CD4-positive, alpha-beta memory T cell (primary cell): ENCODE measurements at regions of chr1 and their contacts with region 1.

Region 1: DNA sequence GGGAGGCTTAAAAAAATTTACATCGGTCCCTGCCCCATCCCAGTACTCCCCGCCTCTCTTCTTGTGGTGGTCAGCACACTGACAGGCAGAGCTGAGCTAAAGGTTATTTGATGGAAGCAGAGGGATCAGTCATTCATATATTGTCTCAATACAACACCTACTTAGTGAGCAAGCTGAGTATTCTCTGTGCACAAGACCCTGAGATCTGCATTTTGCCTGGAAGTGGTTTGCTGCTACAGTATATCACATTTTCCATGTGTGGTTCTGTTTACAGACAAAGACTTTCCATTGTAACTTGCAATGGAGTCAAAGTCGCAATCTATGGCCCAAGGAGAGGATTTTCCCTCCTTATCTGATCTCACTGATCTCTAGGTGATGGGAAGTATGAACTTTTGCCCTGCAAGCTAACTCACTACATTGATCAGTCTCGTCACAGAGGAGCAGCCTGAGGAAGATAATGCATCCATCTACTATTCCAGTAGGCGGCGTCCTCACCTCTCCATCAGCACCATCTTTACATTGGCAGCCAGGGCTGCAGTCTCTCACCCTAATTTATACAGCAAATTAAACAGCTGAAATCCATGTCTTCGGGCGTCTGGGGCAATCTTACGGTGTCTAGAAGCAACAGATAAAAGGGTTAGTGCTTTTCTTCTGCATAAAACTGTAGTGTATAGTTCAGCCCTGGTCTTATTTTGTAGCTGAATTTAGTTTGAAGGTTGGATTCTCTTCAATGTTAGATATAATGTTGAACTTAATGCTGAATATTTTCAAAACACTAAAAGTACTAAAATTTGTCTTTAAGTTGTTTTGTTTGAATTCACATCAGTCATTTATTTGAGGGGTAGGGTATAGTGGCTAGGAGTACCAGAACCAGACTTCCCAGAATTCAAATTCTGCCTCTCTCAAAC is 3.2 kb upstream of the TRAF5 start:
- DNase-seq: peak; percentile 67 to 73 (median 70)
- H3K4me3 ChIP-seq: no peak overlapping the region
- H3K4me3 Mint-ChIP-seq: no peak overlapping the region
- H3K27ac ChIP-seq: no peak overlapping the region
- H3K27ac Mint-ChIP-seq: peak overlapping the region in 3 of 7 donors; percentile 14 to 49 (median 18)
- H3K4me1 ChIP-seq: peaks cover 36% of the 10 kb centered on the region
- H3K4me1 Mint-ChIP-seq: peaks cover 21 to 47% (median 38%) of the 10 kb centered on the region in 4 donors
- H3K27me3 ChIP-seq: no peaks in the 10 kb centered on the region
- H3K27me3 Mint-ChIP-seq: no peaks in the 10 kb centered on the region

Region 2: GRCh38 chr1:210448297-210448892 is 875.0 kb before region 1 on chr1:
- CTCF ChIA-PET with region 1: no interaction called
- POLR2A ChIA-PET with region 1: no interaction called
- intact Hi-C with region 1: loop called (anchors 10 kb)
- DNase-seq: peak in 4 of 5 donors; percentile 10 to 18 (median 12)
- H3K4me3 ChIP-seq: no peak overlapping the region
- H3K4me3 Mint-ChIP-seq: no peak overlapping the region
- H3K27ac ChIP-seq: no peak overlapping the region
- H3K27ac Mint-ChIP-seq: no peak overlapping the region
- H3K4me1 ChIP-seq: peaks cover 14% of the 10 kb centered on the region
- H3K4me1 Mint-ChIP-seq: peaks cover 7 to 19% (median 12%) of the 10 kb centered on the region in 4 donors
- H3K27me3 ChIP-seq: no peaks in the 10 kb centered on the region
- H3K27me3 Mint-ChIP-seq: peaks cover 0 to under 1% of the 10 kb centered on the region in 2 donors

Region 3: DNA sequence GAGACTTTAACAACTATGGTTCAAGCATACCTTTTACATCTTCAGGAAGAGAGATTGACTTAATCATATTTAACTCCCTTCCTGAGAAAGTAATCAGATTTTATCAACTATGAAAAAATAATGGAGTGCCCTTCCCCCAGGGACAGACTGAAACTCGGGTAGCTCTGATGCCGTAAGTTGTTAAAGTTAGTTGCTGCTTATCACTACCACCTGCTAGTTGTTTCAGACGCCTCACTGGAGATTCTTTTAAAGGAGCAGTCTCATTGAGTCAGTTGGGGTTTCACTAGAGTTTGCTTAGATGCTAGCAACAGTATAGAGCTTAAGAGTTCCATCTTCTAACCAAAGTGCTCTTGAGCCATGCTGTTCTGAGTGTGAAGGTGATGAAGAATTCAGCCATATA is 13.8 kb before region 1 on chr1:
- CTCF ChIA-PET with region 1: interaction called, 14 read pairs
- POLR2A ChIA-PET with region 1: interaction called, 3 read pairs
- intact Hi-C with region 1: no loop called
- DNase-seq: no peak
- H3K4me3 ChIP-seq: no peak overlapping the region
- H3K4me3 Mint-ChIP-seq: no peak overlapping the region
- H3K27ac ChIP-seq: no peak overlapping the region
- H3K27ac Mint-ChIP-seq: peak overlapping the region in 3 of 7 donors; percentile 9 to 65 (median 12)
- H3K4me1 ChIP-seq: no peaks in the 10 kb centered on the region
- H3K4me1 Mint-ChIP-seq: peaks cover 4 to 9% (median 8%) of the 10 kb centered on the region in 4 donors
- H3K27me3 ChIP-seq: no peaks in the 10 kb centered on the region
- H3K27me3 Mint-ChIP-seq: no peaks in the 10 kb centered on the region

Region 4: GRCh38 chr1:211352985-211353515 is 29.6 kb after region 1 on chr1:
- CTCF ChIA-PET with region 1: interaction called, 250 read pairs
- POLR2A ChIA-PET with region 1: interaction called, 37 read pairs
- intact Hi-C with region 1: loop called (anchors 1 kb)
- DNase-seq: peak; percentile 42 to 65 (median 55)
- H3K4me3 ChIP-seq: peak overlapping the region; percentile 3 to 34
- H3K4me3 Mint-ChIP-seq: peak overlapping the region; percentile 77 to 92 (median 85)
- H3K27ac ChIP-seq: peak overlapping the region; percentile 25
- H3K27ac Mint-ChIP-seq: peak overlapping the region; percentile 86 to 97 (median 95)
- H3K4me1 ChIP-seq: peaks cover 63% of the 10 kb centered on the region
- H3K4me1 Mint-ChIP-seq: peaks cover 53 to 73% (median 64%) of the 10 kb centered on the region in 4 donors
- H3K27me3 ChIP-seq: no peaks in the 10 kb centered on the region
- H3K27me3 Mint-ChIP-seq: no peaks in the 10 kb centered on the region

Region 5: GRCh38 chr1:211415700-211416099 is 92.3 kb after region 1 on chr1:
- CTCF ChIA-PET with region 1: interaction called, 4 read pairs
- POLR2A ChIA-PET with region 1: interaction called, 7 read pairs
- intact Hi-C with region 1: loop called (anchors 10 kb)
- DNase-seq: no peak
- H3K4me3 ChIP-seq: no peak overlapping the region
- H3K4me3 Mint-ChIP-seq: peak overlapping the region; percentile 49 to 83 (median 78)
- H3K27ac ChIP-seq: peak overlapping the region; percentile 20
- H3K27ac Mint-ChIP-seq: peak overlapping the region; percentile 24 to 86 (median 54)
- H3K4me1 ChIP-seq: peaks cover 7% of the 10 kb centered on the region
- H3K4me1 Mint-ChIP-seq: peaks cover 9 to 13% (median 12%) of the 10 kb centered on the region in 4 donors
- H3K27me3 ChIP-seq: no peaks in the 10 kb centered on the region
- H3K27me3 Mint-ChIP-seq: no peaks in the 10 kb centered on the region

Region 6: DNA sequence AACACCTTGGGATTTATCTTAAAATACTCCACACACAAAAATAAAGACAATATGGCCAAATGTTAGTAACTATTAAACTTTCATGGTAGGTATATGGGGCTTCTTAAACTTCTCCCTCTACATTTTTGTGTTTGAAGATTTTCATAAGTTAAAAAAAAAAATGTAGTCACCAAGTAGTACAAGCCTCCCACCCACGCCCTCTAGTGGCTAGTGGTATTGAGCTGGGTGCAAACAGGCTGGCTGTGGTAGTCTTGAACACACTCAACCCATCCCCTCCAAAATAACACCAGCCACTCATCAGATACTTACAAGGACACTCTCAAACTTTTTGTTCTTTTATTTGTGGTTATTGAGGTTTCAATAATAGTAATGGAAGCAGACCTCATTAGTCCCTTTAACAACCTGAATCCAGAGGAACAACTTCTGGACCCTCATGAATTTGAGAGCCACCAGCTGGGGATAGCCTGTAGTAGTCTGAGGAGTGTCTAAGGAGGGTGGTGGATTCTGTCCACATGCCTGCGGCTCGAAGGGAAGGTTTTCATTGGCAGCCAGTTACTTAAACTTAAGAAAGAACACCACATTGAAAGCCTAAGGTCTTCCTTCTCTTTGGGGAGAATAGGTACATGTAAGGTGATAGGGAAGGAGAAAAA is 152.9 kb after region 1 on chr1:
- CTCF ChIA-PET with region 1: interaction called, 43 read pairs
- POLR2A ChIA-PET with region 1: interaction called, 4 read pairs
- intact Hi-C with region 1: loop called (anchors 1 kb)
- DNase-seq: peak; percentile 69 to 73 (median 71)
- H3K4me3 ChIP-seq: no peak overlapping the region
- H3K4me3 Mint-ChIP-seq: no peak overlapping the region
- H3K27ac ChIP-seq: no peak overlapping the region
- H3K27ac Mint-ChIP-seq: no peak overlapping the region
- H3K4me1 ChIP-seq: no peaks in the 10 kb centered on the region
- H3K4me1 Mint-ChIP-seq: peaks cover 3 to 6% (median 4%) of the 10 kb centered on the region in 4 donors
- H3K27me3 ChIP-seq: peaks cover 10% of the 10 kb centered on the region
- H3K27me3 Mint-ChIP-seq: peaks cover 14 to 25% of the 10 kb centered on the region in 2 donors

Region 7: GRCh38 chr1:211578640-211579433 is 255.4 kb after region 1 on chr1 and contains the start of gene SLC30A1:
- CTCF ChIA-PET with region 1: no interaction called
- POLR2A ChIA-PET with region 1: interaction called, 3 read pairs
- intact Hi-C with region 1: loop called (anchors 1 kb)
- DNase-seq: peak; percentile 99
- H3K4me3 ChIP-seq: peak within 1 kb of the TSS; percentile 72 to 86
- H3K4me3 Mint-ChIP-seq: peak within 1 kb of the TSS; percentile 90 to 96 (median 92)
- H3K27ac ChIP-seq: peak within 1 kb of the TSS; percentile 76
- H3K27ac Mint-ChIP-seq: peak within 1 kb of the TSS; percentile 86 to 97 (median 93)
- H3K4me1 ChIP-seq: peaks cover 42% of the 10 kb centered on the region
- H3K4me1 Mint-ChIP-seq: peaks cover 23 to 56% (median 36%) of the 10 kb centered on the region in 4 donors
- H3K27me3 ChIP-seq: no peaks in the 10 kb centered on the region
- H3K27me3 Mint-ChIP-seq: peaks cover 0 to 2% of the 10 kb centered on the region in 2 donors
- total RNA-seq, gene SLC30A1: 10.1 to 10.6 TPM